Activated CD4-positive, alpha-beta T cell treated with anti-CD3 and anti-CD28 coated beads, Interleukin-2, amount 10 ng/mL, durations not matched to agents 24 days and 14 days (primary cell): ENCODE measurements at regions of chr22 and their contacts with region 1.

Region 1: DNA sequence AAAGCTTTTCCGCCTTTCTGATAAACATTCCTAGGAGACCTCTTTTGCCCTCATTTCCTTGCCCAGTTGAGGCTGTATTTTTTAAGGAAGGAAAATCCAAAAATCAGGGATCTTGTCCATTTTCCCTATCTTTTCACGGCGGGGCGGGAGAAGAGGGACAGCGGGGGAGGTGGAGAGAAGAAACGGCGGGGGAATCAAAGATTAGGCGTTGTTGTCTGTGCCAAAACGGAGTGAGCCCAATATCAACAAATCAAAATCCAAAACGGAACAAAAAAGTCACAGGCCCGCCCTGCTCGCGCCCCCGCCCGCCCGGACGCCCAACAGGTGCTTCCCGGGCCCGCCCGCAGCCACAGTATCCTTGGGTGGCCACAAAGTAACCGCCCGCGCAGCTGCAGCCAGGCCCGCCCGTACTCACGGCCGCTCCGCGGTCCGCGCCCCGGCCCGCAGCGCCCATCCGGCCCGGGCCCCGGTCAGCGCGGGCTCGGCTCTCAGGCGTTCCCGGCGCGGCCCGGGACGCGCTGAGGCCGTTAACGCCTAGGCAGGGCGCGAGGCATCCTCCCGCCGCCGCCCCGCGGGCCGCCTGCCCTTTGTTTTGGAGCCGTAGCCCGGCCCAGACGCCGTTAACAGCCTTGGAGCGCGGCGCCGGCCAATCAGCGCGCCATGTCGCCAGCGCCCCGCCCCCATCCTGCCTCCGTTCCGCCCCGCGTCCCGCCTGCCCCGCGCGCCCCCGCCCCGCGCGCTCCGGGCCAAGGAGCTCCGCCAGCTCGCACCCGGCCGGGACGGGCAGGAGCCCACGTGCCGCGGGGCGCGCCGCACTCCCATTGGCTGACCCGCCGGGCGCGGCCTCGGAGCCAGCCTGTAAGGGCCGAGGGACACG is at the start of gene YPEL1:
- DNase-seq: peak; percentile 99
- H3K4me3 Mint-ChIP-seq: peak within 1 kb of the TSS; percentile 87
- H3K27ac Mint-ChIP-seq: peak within 1 kb of the TSS; percentile 84
- H3K4me1 Mint-ChIP-seq: peaks cover 17% of the 10 kb centered on the region
- H3K27me3 Mint-ChIP-seq: peaks cover 23% of the 10 kb centered on the region
- total RNA-seq, gene YPEL1: 0.61 and 1.3 TPM in 2 replicates

Region 2: DNA sequence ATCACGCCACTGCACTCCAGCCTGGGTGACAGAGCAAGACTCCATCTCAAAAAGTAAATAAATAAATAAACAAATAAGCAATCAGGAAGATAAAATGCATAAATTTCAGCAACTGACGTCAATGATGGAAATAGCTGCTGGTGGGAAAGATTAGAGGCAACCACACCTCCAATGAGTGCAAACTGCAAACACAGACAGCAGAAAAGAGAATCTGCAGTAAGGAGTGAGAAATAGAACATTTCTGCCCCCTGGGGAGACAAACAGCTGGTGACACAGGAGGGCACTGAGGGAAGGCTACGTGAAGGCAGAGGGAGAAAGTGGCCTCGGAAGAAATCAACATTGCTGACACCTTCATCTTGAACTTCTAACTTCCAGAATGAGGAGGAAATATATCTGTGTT is 883.4 kb before region 1 on chr22:
- intact Hi-C with region 1: no loop called
- DNase-seq: no peak
- H3K4me3 Mint-ChIP-seq: no peak overlapping the region
- H3K27ac Mint-ChIP-seq: no peak overlapping the region
- H3K4me1 Mint-ChIP-seq: peaks cover 16% of the 10 kb centered on the region
- H3K27me3 Mint-ChIP-seq: no peaks in the 10 kb centered on the region

Region 3: GRCh38 chr22:21666786-21667185 is 68.7 kb before region 1 on chr22:
- intact Hi-C with region 1: loop called (anchors 1 kb)
- DNase-seq: no peak
- H3K4me3 Mint-ChIP-seq: peak overlapping the region; percentile 93
- H3K27ac Mint-ChIP-seq: peak overlapping the region; percentile 96
- H3K4me1 Mint-ChIP-seq: peaks cover 22% of the 10 kb centered on the region
- H3K27me3 Mint-ChIP-seq: no peaks in the 10 kb centered on the region

Region 4: GRCh38 chr22:21698430-21699329 is 36.8 kb before region 1 on chr22:
- intact Hi-C with region 1: no loop called
- DNase-seq: no peak
- H3K4me3 Mint-ChIP-seq: no peak overlapping the region
- H3K27ac Mint-ChIP-seq: no peak overlapping the region
- H3K4me1 Mint-ChIP-seq: no peaks in the 10 kb centered on the region
- H3K27me3 Mint-ChIP-seq: no peaks in the 10 kb centered on the region

Region 5: DNA sequence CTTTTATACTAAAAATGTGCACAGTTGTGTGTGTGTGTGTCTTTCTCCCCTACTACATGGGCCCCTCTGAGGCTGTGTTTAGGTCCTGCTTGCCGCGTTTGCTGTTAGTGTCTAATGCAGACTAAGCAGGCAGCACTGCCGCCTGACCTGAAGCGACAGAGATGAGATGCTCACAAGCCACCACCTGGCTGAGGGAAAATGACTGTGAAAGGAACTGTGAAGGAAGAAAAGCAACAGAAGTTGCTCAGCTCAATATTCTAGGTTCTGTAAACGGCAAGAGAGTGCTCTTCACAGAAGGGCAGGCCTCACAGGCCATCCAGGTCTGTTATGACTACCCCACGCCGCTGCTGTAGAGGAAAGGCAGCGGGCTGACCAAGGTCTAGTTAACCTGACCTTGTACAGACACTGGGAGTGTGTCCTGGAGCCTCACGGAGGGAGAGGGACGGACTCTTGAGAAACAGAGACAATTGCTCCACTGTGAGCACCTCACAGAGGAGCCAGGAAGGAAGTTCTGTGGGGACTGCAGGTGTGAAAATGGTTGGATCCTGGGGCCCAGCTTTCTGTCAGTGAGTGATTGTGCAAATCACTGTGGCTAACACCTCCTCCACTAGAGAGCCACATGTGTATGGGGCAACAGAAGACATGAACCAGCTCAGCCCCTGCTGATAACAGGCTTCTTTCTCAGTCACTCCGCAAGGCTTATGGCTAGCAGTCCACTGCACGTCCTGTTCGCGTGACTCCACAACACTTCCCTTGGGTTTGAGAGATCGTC is 31.4 kb after region 1 on chr22:
- intact Hi-C with region 1: loop called (anchors 1 kb)
- DNase-seq: peak; percentile 85
- H3K4me3 Mint-ChIP-seq: peak overlapping the region; percentile 51
- H3K27ac Mint-ChIP-seq: peak overlapping the region; percentile 84
- H3K4me1 Mint-ChIP-seq: peaks cover 60% of the 10 kb centered on the region
- H3K27me3 Mint-ChIP-seq: no peaks in the 10 kb centered on the region

Region 6: GRCh38 chr22:21791635-21792625 is 56.5 kb after region 1 on chr22:
- intact Hi-C with region 1: loop called (anchors 2 kb)
- DNase-seq: peak; percentile 63
- H3K4me3 Mint-ChIP-seq: peak overlapping the region; percentile 4
- H3K27ac Mint-ChIP-seq: peak overlapping the region; percentile 79
- H3K4me1 Mint-ChIP-seq: peaks cover 13% of the 10 kb centered on the region
- H3K27me3 Mint-ChIP-seq: no peaks in the 10 kb centered on the region

Region 7: GRCh38 chr22:21867528-21868266 is 132.3 kb after region 1 on chr22 and contains the start of gene MAPK1:
- intact Hi-C with region 1: loop called (anchors 1 kb)
- DNase-seq: peak; percentile 98
- H3K4me3 Mint-ChIP-seq: peak within 1 kb of the TSS; percentile 92
- H3K27ac Mint-ChIP-seq: peak within 1 kb of the TSS; percentile 97
- H3K4me1 Mint-ChIP-seq: peaks cover 34% of the 10 kb centered on the region
- H3K27me3 Mint-ChIP-seq: peaks cover 19% of the 10 kb centered on the region
- total RNA-seq, gene MAPK1: 101 TPM in 2 replicates